ENCODE measurements at regions of chr19 and their contacts with region 1.

Region 1: DNA sequence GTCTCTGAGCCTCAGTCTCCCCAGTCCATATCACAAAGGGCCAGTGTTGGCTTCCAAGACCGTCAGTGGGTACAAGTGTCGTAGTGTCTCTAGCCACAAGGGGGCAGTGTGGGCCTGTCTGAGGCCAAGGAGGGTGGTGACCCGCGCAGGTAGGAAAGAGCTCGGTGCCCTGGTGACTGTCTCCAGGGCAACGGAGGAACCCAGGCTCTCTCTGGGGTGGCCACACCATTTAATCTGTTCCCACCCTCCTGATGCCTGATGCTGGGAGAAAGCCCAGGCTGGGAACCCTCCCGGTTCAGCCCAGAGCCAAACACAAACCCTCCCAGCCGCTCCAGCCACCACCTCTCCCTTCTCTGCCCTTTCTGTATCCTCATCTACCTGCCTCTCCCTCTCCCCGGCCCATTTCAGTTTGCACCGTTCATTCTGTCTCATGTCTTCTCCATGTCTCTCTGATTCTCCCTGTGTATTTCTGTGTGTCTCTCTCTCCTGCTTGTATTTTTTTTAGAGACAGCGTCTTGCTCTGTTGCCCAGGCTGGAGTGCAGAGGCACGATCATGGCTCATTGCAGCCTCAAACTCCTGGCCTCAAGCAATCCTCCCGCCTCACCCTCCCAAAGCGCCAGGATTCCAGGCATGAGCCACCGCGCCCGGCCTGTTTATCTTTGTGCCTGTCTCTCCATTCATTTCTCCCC is 17.5 kb upstream of the MEIS3 start:
- DNase-seq: peak; percentile 55
- H3K4me3 ChIP-seq: no peak overlapping the region
- H3K27ac ChIP-seq: no peak overlapping the region
- H3K4me1 ChIP-seq: no peaks in the 10 kb centered on the region
- H3K27me3 ChIP-seq: peaks cover 0 to 2% of the 10 kb centered on the region in 2 experiments
- CTCF ChIP-seq: peak; percentile 73 to 88
- POLR2A ChIP-seq: no peak

Region 2: GRCh38 chr19:47475465-47475864 is 38.6 kb after region 1 on chr19:
- CTCF ChIA-PET with region 1: interaction called, 11 read pairs
- POLR2A ChIA-PET with region 1: no interaction called
- dilution Hi-C with region 1: no loop called
- intact Hi-C with region 1: no loop called
- DNase-seq: no peak
- H3K4me3 ChIP-seq: no peak overlapping the region
- H3K27ac ChIP-seq: no peak overlapping the region
- H3K4me1 ChIP-seq: no peaks in the 10 kb centered on the region
- H3K27me3 ChIP-seq: peaks cover 10 to 12% of the 10 kb centered on the region in 2 experiments
- CTCF ChIP-seq: no peak
- POLR2A ChIP-seq: no peak

Region 3: GRCh38 chr19:47514869-47515588 is 78.2 kb after region 1 on chr19 and contains the start of gene NAPA:
- CTCF ChIA-PET with region 1: interaction called, 19 read pairs
- POLR2A ChIA-PET with region 1: no interaction called
- dilution Hi-C with region 1: no loop called
- intact Hi-C with region 1: loop called (anchors 1 kb)
- DNase-seq: peak; percentile 100
- H3K4me3 ChIP-seq: peak within 1 kb of the TSS; percentile 63 to 90 (median 83)
- H3K27ac ChIP-seq: peak within 1 kb of the TSS; percentile 85
- H3K4me1 ChIP-seq: peaks cover 22% of the 10 kb centered on the region
- H3K27me3 ChIP-seq: no peaks in the 10 kb centered on the region
- CTCF ChIP-seq: no peak
- POLR2A ChIP-seq: peak; percentile 90
- total RNA-seq, gene NAPA: 107 TPM in 2 replicates

Region 4: DNA sequence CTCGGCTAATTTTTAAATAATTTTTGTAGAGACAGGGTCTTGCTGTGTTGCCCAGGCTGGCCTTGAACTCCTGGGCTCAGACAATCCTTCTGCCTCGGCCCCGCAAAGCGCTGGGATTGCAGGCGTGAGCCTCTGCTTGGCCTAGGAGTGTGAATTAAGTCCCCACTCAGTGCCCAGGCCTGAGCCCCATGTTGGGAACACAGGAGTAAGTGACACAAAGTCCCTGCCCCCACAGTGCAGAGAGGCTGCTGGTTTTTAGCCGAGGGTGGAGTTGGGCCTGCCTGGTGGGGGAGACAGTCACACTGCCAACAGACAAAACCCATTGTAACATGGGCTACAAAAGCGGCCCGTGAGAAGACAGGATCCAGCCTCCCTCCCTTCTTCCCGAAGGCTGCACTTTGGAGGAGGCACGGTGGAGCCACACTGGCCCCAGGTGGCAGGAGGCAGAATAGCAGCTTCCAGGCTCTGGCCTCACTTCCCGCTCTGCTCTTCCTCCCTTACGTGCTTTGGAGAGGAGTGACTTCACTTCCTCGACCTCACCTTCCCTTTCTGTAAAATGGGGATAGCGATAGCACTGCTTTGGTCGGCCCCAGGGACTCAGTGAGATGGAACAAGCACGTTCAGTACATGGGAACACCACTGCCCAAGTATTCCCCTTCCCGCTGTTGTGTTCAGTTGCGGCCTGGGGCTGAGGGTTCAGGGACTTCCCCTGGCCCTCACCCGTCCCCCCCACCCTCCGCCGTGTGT is 261.2 kb after region 1 on chr19:
- CTCF ChIA-PET with region 1: interaction called, 454 read pairs
- POLR2A ChIA-PET with region 1: no interaction called
- dilution Hi-C with region 1: no loop called
- intact Hi-C with region 1: loop called (anchors 1 kb)
- DNase-seq: peak; percentile 79
- H3K4me3 ChIP-seq: no peak overlapping the region
- H3K27ac ChIP-seq: no peak overlapping the region
- H3K4me1 ChIP-seq: no peaks in the 10 kb centered on the region
- H3K27me3 ChIP-seq: no peaks in the 10 kb centered on the region
- CTCF ChIP-seq: peak; percentile 97 to 99
- POLR2A ChIP-seq: no peak

Region 5: DNA sequence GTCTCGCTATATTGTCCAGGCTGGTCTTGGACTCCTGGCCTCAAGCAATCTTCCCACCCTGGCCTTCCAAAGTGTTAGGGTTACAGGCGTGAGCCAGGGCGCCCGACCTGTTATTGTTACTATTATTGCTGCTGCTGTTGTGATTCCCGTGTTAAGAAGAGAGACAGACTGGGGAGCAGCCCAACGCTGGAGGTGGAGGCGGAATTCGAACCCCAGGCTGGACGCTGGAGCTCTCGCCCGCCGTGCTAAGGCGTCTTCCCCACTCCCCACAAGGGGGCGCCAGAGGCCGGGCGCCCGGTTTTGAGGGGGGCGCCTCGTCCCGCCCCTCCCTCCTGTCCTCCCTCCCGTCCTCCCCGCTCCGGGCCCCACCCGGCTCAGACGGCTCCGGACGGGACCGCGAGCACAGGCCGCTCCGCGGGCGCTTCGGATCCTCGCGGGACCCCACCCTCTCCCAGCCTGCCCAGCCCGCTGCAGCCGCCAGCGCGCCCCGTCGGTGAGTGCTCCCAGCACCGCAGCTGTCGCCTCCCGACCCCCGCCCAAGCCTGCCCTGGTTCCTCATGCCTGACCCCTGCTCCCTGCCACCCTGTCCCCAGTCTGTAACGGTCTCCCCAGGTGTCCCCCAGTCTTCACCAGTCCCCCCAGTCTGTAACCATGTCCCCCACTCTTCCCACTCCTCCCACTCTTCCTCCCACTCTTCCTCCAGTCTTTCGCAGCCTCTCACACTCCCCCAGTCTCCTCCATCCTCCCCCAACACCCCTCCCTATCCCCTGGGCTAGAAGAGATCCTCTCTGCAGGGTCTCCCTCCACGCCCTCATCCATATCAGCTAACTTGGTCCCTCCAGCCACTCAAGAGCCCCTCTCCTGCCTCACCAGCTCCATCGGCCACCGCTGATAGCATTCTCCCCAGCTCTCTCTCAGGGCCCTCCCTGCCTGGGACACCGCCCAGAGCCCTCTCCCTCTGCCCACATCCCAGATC is 276.5 kb after region 1 on chr19 and contains the start of gene EHD2:
- CTCF ChIA-PET with region 1: interaction called, 454 read pairs
- POLR2A ChIA-PET with region 1: no interaction called
- dilution Hi-C with region 1: no loop called
- intact Hi-C with region 1: no loop called
- DNase-seq: peak; percentile 61
- H3K4me3 ChIP-seq: peak within 1 kb of the TSS; percentile 55 to 92 (median 70)
- H3K27ac ChIP-seq: no peak within 1 kb of the TSS
- H3K4me1 ChIP-seq: peaks cover 8% of the 10 kb centered on the region
- H3K27me3 ChIP-seq: no peaks in the 10 kb centered on the region
- CTCF ChIP-seq: peak; percentile 83 to 98
- POLR2A ChIP-seq: peak; percentile 93
- total RNA-seq, gene EHD2: 220 TPM in 2 replicates